Caco-2 (cell line): ENCODE measurements at regions of chr6 and their contacts with region 1.

Region 1: GRCh38 chr6:12289933-12290820 is at the start of gene EDN1:
- DNase-seq: peak; percentile 82 to 86
- H3K4me3 ChIP-seq: peak within 1 kb of the TSS; percentile 50
- H3K4me3 Mint-ChIP-seq: peak within 1 kb of the TSS; percentile 86
- H3K27ac Mint-ChIP-seq: peak within 1 kb of the TSS; percentile 86
- H3K4me1 ChIP-seq: peaks cover 31% of the 10 kb centered on the region
- H3K4me1 Mint-ChIP-seq: peaks cover 29% of the 10 kb centered on the region
- H3K27me3 ChIP-seq: no peaks in the 10 kb centered on the region
- H3K27me3 Mint-ChIP-seq: no peaks in the 10 kb centered on the region
- CTCF ChIP-seq: peak; percentile 50 to 54
- total RNA-seq, gene EDN1: 13.5 and 14.0 TPM in 2 replicates

Region 2: GRCh38 chr6:11585426-11586016 is 704.7 kb before region 1 on chr6:
- CTCF ChIA-PET with region 1: interaction called, 5 read pairs
- POLR2A ChIA-PET with region 1: no interaction called
- intact Hi-C with region 1: loop called (anchors 1 kb)
- DNase-seq: peak in 1 of 2 experiments; percentile 60
- H3K4me3 ChIP-seq: no peak overlapping the region
- H3K4me3 Mint-ChIP-seq: no peak overlapping the region
- H3K27ac Mint-ChIP-seq: peak overlapping the region; percentile 59
- H3K4me1 ChIP-seq: peaks cover 46% of the 10 kb centered on the region
- H3K4me1 Mint-ChIP-seq: peaks cover 43% of the 10 kb centered on the region
- H3K27me3 ChIP-seq: no peaks in the 10 kb centered on the region
- H3K27me3 Mint-ChIP-seq: no peaks in the 10 kb centered on the region
- CTCF ChIP-seq: peak; percentile 40 to 79

Region 3: GRCh38 chr6:12150812-12151432 is 139.3 kb before region 1 on chr6:
- CTCF ChIA-PET with region 1: interaction called, 3 read pairs
- POLR2A ChIA-PET with region 1: no interaction called
- intact Hi-C with region 1: loop called (anchors 1 kb)
- DNase-seq: peak; percentile 52 to 71
- H3K4me3 ChIP-seq: no peak overlapping the region
- H3K4me3 Mint-ChIP-seq: no peak overlapping the region
- H3K27ac Mint-ChIP-seq: no peak overlapping the region
- H3K4me1 ChIP-seq: no peaks in the 10 kb centered on the region
- H3K4me1 Mint-ChIP-seq: no peaks in the 10 kb centered on the region
- H3K27me3 ChIP-seq: no peaks in the 10 kb centered on the region
- H3K27me3 Mint-ChIP-seq: no peaks in the 10 kb centered on the region
- CTCF ChIP-seq: peak; percentile 79 to 86

Region 4: GRCh38 chr6:12245763-12246718 is 44.1 kb before region 1 on chr6:
- CTCF ChIA-PET with region 1: interaction called, 9 read pairs
- POLR2A ChIA-PET with region 1: no interaction called
- intact Hi-C with region 1: loop called (anchors 5 kb)
- DNase-seq: no peak
- H3K4me3 ChIP-seq: no peak overlapping the region
- H3K4me3 Mint-ChIP-seq: no peak overlapping the region
- H3K27ac Mint-ChIP-seq: no peak overlapping the region
- H3K4me1 ChIP-seq: peaks cover 28% of the 10 kb centered on the region
- H3K4me1 Mint-ChIP-seq: no peaks in the 10 kb centered on the region
- H3K27me3 ChIP-seq: no peaks in the 10 kb centered on the region
- H3K27me3 Mint-ChIP-seq: no peaks in the 10 kb centered on the region
- CTCF ChIP-seq: no peak

Region 5: GRCh38 chr6:12369781-12370262 is 79.6 kb after region 1 on chr6:
- CTCF ChIA-PET with region 1: interaction called, 4 read pairs
- POLR2A ChIA-PET with region 1: interaction called, 9 read pairs
- intact Hi-C with region 1: loop called (anchors 2 kb)
- DNase-seq: peak in 1 of 2 experiments; percentile 48
- H3K4me3 ChIP-seq: no peak overlapping the region
- H3K4me3 Mint-ChIP-seq: no peak overlapping the region
- H3K27ac Mint-ChIP-seq: peak overlapping the region; percentile 16
- H3K4me1 ChIP-seq: peaks cover 71% of the 10 kb centered on the region
- H3K4me1 Mint-ChIP-seq: peaks cover 52% of the 10 kb centered on the region
- H3K27me3 ChIP-seq: no peaks in the 10 kb centered on the region
- H3K27me3 Mint-ChIP-seq: no peaks in the 10 kb centered on the region
- CTCF ChIP-seq: no peak

Region 6: GRCh38 chr6:12483712-12484111 is 193.5 kb after region 1 on chr6:
- CTCF ChIA-PET with region 1: interaction called, 6 read pairs
- POLR2A ChIA-PET with region 1: no interaction called
- intact Hi-C with region 1: loop called (anchors 1 kb)
- DNase-seq: no peak
- H3K4me3 ChIP-seq: no peak overlapping the region
- H3K4me3 Mint-ChIP-seq: peak overlapping the region; percentile 21
- H3K27ac Mint-ChIP-seq: peak overlapping the region; percentile 63
- H3K4me1 ChIP-seq: peaks cover 40% of the 10 kb centered on the region
- H3K4me1 Mint-ChIP-seq: peaks cover 42% of the 10 kb centered on the region
- H3K27me3 ChIP-seq: no peaks in the 10 kb centered on the region
- H3K27me3 Mint-ChIP-seq: no peaks in the 10 kb centered on the region
- CTCF ChIP-seq: no peak

Region 7: GRCh38 chr6:12605888-12606345 is 315.7 kb after region 1 on chr6:
- CTCF ChIA-PET with region 1: interaction called, 39 read pairs
- POLR2A ChIA-PET with region 1: interaction called, 4 read pairs
- intact Hi-C with region 1: loop called (anchors 1 kb)
- DNase-seq: peak; percentile 61 to 71
- H3K4me3 ChIP-seq: no peak overlapping the region
- H3K4me3 Mint-ChIP-seq: no peak overlapping the region
- H3K27ac Mint-ChIP-seq: no peak overlapping the region
- H3K4me1 ChIP-seq: peaks cover 19% of the 10 kb centered on the region
- H3K4me1 Mint-ChIP-seq: peaks cover 15% of the 10 kb centered on the region
- H3K27me3 ChIP-seq: no peaks in the 10 kb centered on the region
- H3K27me3 Mint-ChIP-seq: no peaks in the 10 kb centered on the region
- CTCF ChIP-seq: peak; percentile 71 to 72